HEK293 (cell line): ENCODE measurements at regions of chr15 and their contacts with region 1.

Region 1: GRCh38 chr15:93030430-93031105 is 58.4 kb downstream of the RGMA start:
- H3K4me3 ChIP-seq: no peak overlapping the region
- H3K27ac ChIP-seq: no peak overlapping the region
- H3K4me1 ChIP-seq: no peaks in the 10 kb centered on the region
- CTCF ChIP-seq: peak; percentile 88

Region 2: GRCh38 chr15:93018580-93018979 is 12.0 kb before region 1 on chr15:
- CTCF ChIA-PET with region 1: interaction called, 25 read pairs
- POLR2A ChIA-PET with region 1: no interaction called
- H3K4me3 ChIP-seq: no peak overlapping the region
- H3K27ac ChIP-seq: peak overlapping the region; percentile 17; the same call in 1 of the 2 replicates
- H3K4me1 ChIP-seq: no peaks in the 10 kb centered on the region
- CTCF ChIP-seq: 0 out of 2 replicates have a peak, but pooled peaks have one; percentile 18

Region 3: DNA sequence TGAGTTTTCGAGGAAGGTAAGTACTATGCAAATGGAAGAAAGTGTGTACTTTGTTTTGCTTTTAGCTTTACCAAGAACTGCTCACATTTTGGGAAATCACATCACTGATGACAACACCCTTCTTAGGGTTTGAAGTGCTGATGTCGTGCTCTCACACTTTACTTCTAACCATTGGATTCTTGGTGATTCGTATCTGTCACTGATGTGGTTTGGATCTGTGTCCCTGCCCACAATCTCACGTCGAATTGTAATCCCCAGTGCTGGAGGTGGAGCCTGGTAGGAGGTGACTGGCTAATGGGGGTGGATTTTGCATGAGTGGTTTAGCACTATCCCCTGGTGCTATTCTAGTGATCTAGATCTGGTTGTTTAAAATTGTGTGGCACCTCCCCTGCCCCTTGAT is 133.8 kb after region 1 on chr15:
- CTCF ChIA-PET with region 1: no interaction called
- POLR2A ChIA-PET with region 1: no interaction called
- H3K4me3 ChIP-seq: no peak overlapping the region
- H3K27ac ChIP-seq: no peak overlapping the region
- H3K4me1 ChIP-seq: peaks cover 3% of the 10 kb centered on the region; the same call in 1 of the 2 replicates
- CTCF ChIP-seq: no peak

Region 4: GRCh38 chr15:93974804-93975481 is 944.4 kb after region 1 on chr15:
- CTCF ChIA-PET with region 1: interaction called, 15 read pairs
- POLR2A ChIA-PET with region 1: no interaction called
- H3K4me3 ChIP-seq: no peak overlapping the region
- H3K27ac ChIP-seq: no peak overlapping the region
- H3K4me1 ChIP-seq: no peaks in the 10 kb centered on the region
- CTCF ChIP-seq: no peak